Activated CD8-positive, alpha-beta T cell treated with anti-CD3 and anti-CD28 coated beads, Interleukin-2, amount 10 ng/mL, durations not matched to agents 7 days and 5 days (primary cell): ENCODE measurements at regions of chr1 and their contacts with region 1.

Region 1: GRCh38 chr1:85259118-85259911 is at the start of gene C1orf52:
- DNase-seq: peak; percentile 98
- ATAC-seq: peak; percentile 92
- H3K4me3 Mint-ChIP-seq: peak within 1 kb of the TSS; percentile 95
- H3K27ac Mint-ChIP-seq: peak within 1 kb of the TSS; percentile 97
- H3K4me1 Mint-ChIP-seq: peaks cover 32% of the 10 kb centered on the region
- H3K27me3 Mint-ChIP-seq: no peaks in the 10 kb centered on the region
- total RNA-seq, gene C1orf52: 25.5 to 29.5 TPM

Region 2: DNA sequence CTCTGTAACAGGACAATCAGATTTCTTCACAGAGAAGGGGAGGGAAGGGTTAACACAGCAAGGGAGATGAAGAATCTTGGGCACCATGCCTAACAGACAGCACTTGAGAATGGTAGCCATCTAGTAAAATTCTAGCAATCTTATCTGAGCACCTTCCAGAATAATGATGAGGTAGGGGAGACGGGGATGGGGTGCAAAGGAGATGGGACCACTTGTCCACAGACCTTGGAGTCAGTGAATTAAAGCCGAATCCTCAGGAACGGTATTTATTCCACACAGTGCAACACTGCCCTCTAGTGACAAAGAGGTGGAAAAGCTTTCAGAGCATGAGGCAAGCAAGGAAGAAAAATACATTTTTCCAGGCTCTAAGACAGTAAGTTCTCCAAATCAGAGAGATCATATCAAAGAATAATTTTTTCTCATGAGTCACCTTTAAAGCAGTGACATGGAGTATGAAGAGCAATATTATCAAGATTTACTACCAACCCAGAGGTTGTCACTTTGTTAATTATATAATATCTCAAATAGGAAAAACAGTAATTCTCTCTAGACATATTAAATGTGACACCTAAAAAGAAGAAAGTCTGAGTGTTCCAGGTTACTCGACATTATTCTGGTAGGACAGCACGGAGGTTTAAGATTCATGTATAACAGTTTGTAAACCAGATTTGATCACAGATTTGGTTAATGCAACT is 323.1 kb before region 1 on chr1:
- CTCF ChIA-PET with region 1: interaction called, 304 read pairs
- POLR2A ChIA-PET with region 1: no interaction called
- DNase-seq: peak; percentile 49
- ATAC-seq: peak; percentile 55
- H3K4me3 Mint-ChIP-seq: no peak overlapping the region
- H3K27ac Mint-ChIP-seq: no peak overlapping the region
- H3K4me1 Mint-ChIP-seq: no peaks in the 10 kb centered on the region
- H3K27me3 Mint-ChIP-seq: no peaks in the 10 kb centered on the region

Region 3: GRCh38 chr1:85027242-85027983 is 231.9 kb before region 1 on chr1:
- CTCF ChIA-PET with region 1: interaction called, 22 read pairs
- POLR2A ChIA-PET with region 1: interaction called, 3 read pairs
- DNase-seq: peak; percentile 34
- ATAC-seq: peak; percentile 84
- H3K4me3 Mint-ChIP-seq: no peak overlapping the region
- H3K27ac Mint-ChIP-seq: peak overlapping the region; percentile 20
- H3K4me1 Mint-ChIP-seq: peaks cover 10% of the 10 kb centered on the region
- H3K27me3 Mint-ChIP-seq: no peaks in the 10 kb centered on the region

Region 4: GRCh38 chr1:85230305-85230980 is 28.9 kb before region 1 on chr1:
- CTCF ChIA-PET with region 1: interaction called, 16 read pairs
- POLR2A ChIA-PET with region 1: interaction called, 3 read pairs
- DNase-seq: no peak
- ATAC-seq: peak; percentile 58
- H3K4me3 Mint-ChIP-seq: no peak overlapping the region
- H3K27ac Mint-ChIP-seq: no peak overlapping the region
- H3K4me1 Mint-ChIP-seq: peaks cover 3% of the 10 kb centered on the region
- H3K27me3 Mint-ChIP-seq: peaks cover 19% of the 10 kb centered on the region

Region 5: GRCh38 chr1:85276215-85276977 is 17.1 kb after region 1 on chr1 and contains the start of gene BCL10:
- CTCF ChIA-PET with region 1: interaction called, 66 read pairs
- POLR2A ChIA-PET with region 1: interaction called, 41 read pairs
- DNase-seq: peak; percentile 98
- ATAC-seq: peak; percentile 99
- H3K4me3 Mint-ChIP-seq: peak within 1 kb of the TSS; percentile 81
- H3K27ac Mint-ChIP-seq: peak within 1 kb of the TSS; percentile 95
- H3K4me1 Mint-ChIP-seq: peaks cover 45% of the 10 kb centered on the region
- H3K27me3 Mint-ChIP-seq: peaks cover 7% of the 10 kb centered on the region
- total RNA-seq, gene BCL10: 26.4 to 27.0 TPM